Dendritic cell treated with granulocyte-macrophage colony-stimulating factor and Interleukin-4, amounts not matched to agents 40 ng/mL and 50 ng/mL, for 4 days (primary cell): ENCODE measurements at regions of chr6 and their contacts with region 1.

Region 1: GRCh38 chr6:70527071-70527737 is 39.5 kb upstream of the SDHAF4 start:
- H3K4me3 Mint-ChIP-seq: no peak overlapping the region
- H3K27ac Mint-ChIP-seq: no peak overlapping the region
- H3K4me1 Mint-ChIP-seq: no peaks in the 10 kb centered on the region
- H3K27me3 Mint-ChIP-seq: no peaks in the 10 kb centered on the region

Region 2: GRCh38 chr6:70574643-70575042 is 47.4 kb after region 1 on chr6:
- intact Hi-C with region 1: loop called (anchors 5 kb)
- H3K4me3 Mint-ChIP-seq: no peak overlapping the region
- H3K27ac Mint-ChIP-seq: no peak overlapping the region
- H3K4me1 Mint-ChIP-seq: no peaks in the 10 kb centered on the region
- H3K27me3 Mint-ChIP-seq: no peaks in the 10 kb centered on the region

Region 3: DNA sequence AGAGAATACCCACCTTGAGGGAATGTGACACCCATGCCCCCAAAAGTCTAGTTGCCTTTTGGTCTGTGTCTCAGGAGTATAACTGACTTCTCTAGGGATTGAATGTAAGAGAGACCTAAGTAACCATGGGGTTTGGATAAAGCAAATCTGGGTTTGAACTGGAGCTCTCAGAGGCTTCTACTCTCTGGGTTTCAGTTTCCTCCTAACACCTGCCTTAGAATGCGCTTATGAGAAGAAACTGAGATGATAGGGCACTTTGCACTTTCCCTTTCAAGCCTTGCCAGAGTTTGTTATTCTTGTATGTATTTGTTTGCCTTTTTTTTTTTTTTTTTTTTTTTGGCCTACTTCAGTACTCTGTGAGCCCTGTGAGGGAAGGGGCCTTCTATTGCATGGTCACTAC is 58.9 kb after region 1 on chr6:
- intact Hi-C with region 1: no loop called
- H3K4me3 Mint-ChIP-seq: no peak overlapping the region
- H3K27ac Mint-ChIP-seq: no peak overlapping the region
- H3K4me1 Mint-ChIP-seq: no peaks in the 10 kb centered on the region
- H3K27me3 Mint-ChIP-seq: no peaks in the 10 kb centered on the region